ENCODE measurements at regions of chr2 and their contacts with region 1.

Region 1: GRCh38 chr2:30239308-30239985 is 8.1 kb downstream of the LBH start:
- DNase-seq: peak; percentile 48 to 91 (median 79)
- ATAC-seq: peak; percentile 73
- H3K4me3 ChIP-seq: peak overlapping the region; percentile 11 to 39
- H3K4me3 Mint-ChIP-seq: peak overlapping the region; percentile 94
- H3K27ac ChIP-seq: peak overlapping the region; percentile 24 to 60
- H3K27ac Mint-ChIP-seq: peak overlapping the region; percentile 96
- H3K4me1 ChIP-seq: peaks cover 90% of the 10 kb centered on the region
- H3K4me1 Mint-ChIP-seq: peaks cover 88% of the 10 kb centered on the region
- H3K27me3 ChIP-seq: no peaks in the 10 kb centered on the region
- H3K27me3 Mint-ChIP-seq: no peaks in the 10 kb centered on the region
- CTCF ChIP-seq: peak; percentile 95

Region 2: DNA sequence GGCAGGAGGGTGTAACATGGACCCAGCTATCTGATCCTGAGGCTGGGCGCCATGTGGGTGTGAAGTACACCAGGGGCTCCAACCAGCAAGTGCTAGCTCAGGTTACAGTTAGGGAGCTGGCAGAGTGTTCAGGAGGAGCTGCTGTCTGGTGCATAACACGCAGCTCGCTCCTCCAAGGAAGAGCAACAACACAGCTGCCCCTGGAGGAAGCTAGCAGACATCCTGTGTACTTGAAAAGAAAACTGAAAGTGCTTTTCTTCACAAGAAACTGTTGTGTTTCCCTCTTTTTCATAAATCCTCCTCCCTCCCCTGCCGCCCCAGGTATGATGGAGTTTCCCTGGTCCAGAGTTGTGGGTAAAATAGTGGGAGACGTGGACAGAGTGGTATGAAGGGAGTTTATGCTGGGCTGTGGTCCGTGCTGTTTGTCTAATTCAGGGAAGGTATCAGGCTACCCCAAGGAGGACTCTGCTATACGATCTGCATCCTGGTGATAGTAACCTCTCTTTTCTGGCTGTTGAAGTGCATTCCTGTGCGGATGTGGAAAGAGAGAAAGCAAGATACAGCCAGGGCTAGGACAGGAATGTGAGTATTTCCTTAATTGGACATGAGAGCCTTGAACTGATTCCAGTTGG is 14.2 kb before region 1 on chr2:
- CTCF ChIA-PET with region 1: interaction called, 230 read pairs
- POLR2A ChIA-PET with region 1: interaction called, 54 read pairs
- intact Hi-C with region 1: no loop called
- DNase-seq: peak in 8 of 9 experiments; percentile 37 to 86 (median 57)
- ATAC-seq: peak; percentile 68
- H3K4me3 ChIP-seq: peak overlapping the region; percentile 59 to 61
- H3K4me3 Mint-ChIP-seq: peak overlapping the region; percentile 99
- H3K27ac ChIP-seq: peak overlapping the region; percentile 78 to 93
- H3K27ac Mint-ChIP-seq: peak overlapping the region; percentile 100
- H3K4me1 ChIP-seq: peaks cover 76% of the 10 kb centered on the region
- H3K4me1 Mint-ChIP-seq: peaks cover 83% of the 10 kb centered on the region
- H3K27me3 ChIP-seq: no peaks in the 10 kb centered on the region
- H3K27me3 Mint-ChIP-seq: no peaks in the 10 kb centered on the region
- CTCF ChIP-seq: no peak

Region 3: GRCh38 chr2:30252723-30253701 is 13.6 kb after region 1 on chr2:
- CTCF ChIA-PET with region 1: interaction called, 230 read pairs
- POLR2A ChIA-PET with region 1: interaction called, 123 read pairs
- intact Hi-C with region 1: loop called (anchors 1 to 2 kb)
- DNase-seq: peak in 7 of 9 experiments; percentile 36 to 64 (median 55)
- ATAC-seq: peak; percentile 37
- H3K4me3 ChIP-seq: peak overlapping the region in 1 of 2 experiments; percentile 17
- H3K4me3 Mint-ChIP-seq: peak overlapping the region; percentile 46
- H3K27ac ChIP-seq: peak overlapping the region; percentile 28 to 68
- H3K27ac Mint-ChIP-seq: peak overlapping the region; percentile 98
- H3K4me1 ChIP-seq: peaks cover 97% of the 10 kb centered on the region
- H3K4me1 Mint-ChIP-seq: peaks cover 96% of the 10 kb centered on the region
- H3K27me3 ChIP-seq: no peaks in the 10 kb centered on the region
- H3K27me3 Mint-ChIP-seq: no peaks in the 10 kb centered on the region
- CTCF ChIP-seq: no peak

Region 4: DNA sequence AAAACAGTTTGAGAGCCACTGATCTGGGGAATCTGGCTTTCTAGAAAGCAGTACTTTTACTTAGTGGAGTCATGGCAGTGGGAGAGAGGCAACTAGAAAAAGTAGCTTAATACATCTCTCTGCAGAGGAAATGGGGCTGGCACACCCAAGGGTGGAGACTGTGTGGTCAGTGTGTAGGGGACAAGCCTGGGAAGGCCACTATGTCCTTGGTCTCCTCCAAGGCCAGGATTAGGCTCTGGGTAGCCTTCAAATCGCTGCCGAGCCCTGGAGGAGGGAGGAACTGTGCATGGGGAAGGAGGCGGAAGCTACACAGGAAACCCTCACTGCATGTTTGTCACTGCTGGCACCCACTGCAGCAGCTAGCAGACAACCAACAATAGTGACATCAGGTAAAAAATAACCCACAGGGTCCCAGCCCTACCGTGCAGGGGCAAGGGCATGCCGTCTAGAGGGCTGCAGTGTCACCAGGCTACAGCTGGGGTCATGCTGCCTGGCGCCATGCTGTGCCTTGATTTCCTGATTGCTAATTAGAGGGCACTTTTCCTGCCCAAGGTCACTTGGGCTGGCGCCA is 26.7 kb after region 1 on chr2:
- CTCF ChIA-PET with region 1: interaction called, 17 read pairs
- POLR2A ChIA-PET with region 1: interaction called, 63 read pairs
- intact Hi-C with region 1: no loop called
- DNase-seq: peak; percentile 49 to 89 (median 71)
- ATAC-seq: peak; percentile 90
- H3K4me3 ChIP-seq: peak overlapping the region; percentile 31 to 40
- H3K4me3 Mint-ChIP-seq: peak overlapping the region; percentile 82
- H3K27ac ChIP-seq: peak overlapping the region; percentile 72 to 87
- H3K27ac Mint-ChIP-seq: peak overlapping the region; percentile 98
- H3K4me1 ChIP-seq: peaks cover 69% of the 10 kb centered on the region
- H3K4me1 Mint-ChIP-seq: peaks cover 85% of the 10 kb centered on the region
- H3K27me3 ChIP-seq: no peaks in the 10 kb centered on the region
- H3K27me3 Mint-ChIP-seq: no peaks in the 10 kb centered on the region
- CTCF ChIP-seq: no peak

Region 5: DNA sequence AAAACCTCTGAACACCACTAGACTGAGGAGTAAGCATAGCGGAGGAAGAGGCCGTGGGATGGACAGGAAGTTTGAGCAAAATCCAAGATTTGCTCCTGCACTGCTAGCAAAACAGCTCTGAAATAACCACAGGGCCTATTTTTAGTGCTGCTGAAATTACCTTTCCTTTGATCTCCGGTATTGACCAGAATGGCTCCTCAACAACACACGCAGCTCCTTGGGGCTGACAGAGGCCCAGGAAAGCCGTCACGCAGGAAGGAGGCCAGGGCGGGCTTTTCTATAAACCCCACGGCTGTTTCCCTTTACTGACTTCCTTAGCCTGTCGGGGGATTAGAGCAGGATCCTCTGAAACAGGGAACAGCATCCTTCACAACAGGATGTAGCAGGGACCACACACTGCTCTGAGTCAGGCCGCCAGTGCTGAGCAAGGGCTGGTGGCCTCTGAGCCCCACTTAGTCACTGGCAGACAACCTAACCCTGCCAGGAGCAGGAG is 126.8 kb after region 1 on chr2:
- CTCF ChIA-PET with region 1: interaction called, 11 read pairs
- POLR2A ChIA-PET with region 1: no interaction called
- intact Hi-C with region 1: loop called in 1 of 2 experiments (anchors 2 kb)
- DNase-seq: peak in 6 of 9 experiments; percentile 25 to 68 (median 37)
- ATAC-seq: peak; percentile 70
- H3K4me3 ChIP-seq: no peak overlapping the region
- H3K4me3 Mint-ChIP-seq: no peak overlapping the region
- H3K27ac ChIP-seq: no peak overlapping the region
- H3K27ac Mint-ChIP-seq: peak overlapping the region; percentile 19
- H3K4me1 ChIP-seq: peaks cover 33% of the 10 kb centered on the region
- H3K4me1 Mint-ChIP-seq: peaks cover 49% of the 10 kb centered on the region
- H3K27me3 ChIP-seq: no peaks in the 10 kb centered on the region
- H3K27me3 Mint-ChIP-seq: no peaks in the 10 kb centered on the region
- CTCF ChIP-seq: no peak

Region 6: GRCh38 chr2:30447149-30448045 is 207.9 kb after region 1 on chr2 and contains the start of gene LCLAT1:
- CTCF ChIA-PET with region 1: interaction called, 14 read pairs
- POLR2A ChIA-PET with region 1: interaction called, 4 read pairs
- intact Hi-C with region 1: loop called in 1 of 2 experiments (anchors 1 kb)
- DNase-seq: peak; percentile 66 to 95 (median 84)
- ATAC-seq: peak; percentile 88
- H3K4me3 ChIP-seq: peak within 1 kb of the TSS; percentile 87 to 99
- H3K4me3 Mint-ChIP-seq: peak within 1 kb of the TSS; percentile 94
- H3K27ac ChIP-seq: peak within 1 kb of the TSS; percentile 92 to 95
- H3K27ac Mint-ChIP-seq: peak within 1 kb of the TSS; percentile 98
- H3K4me1 ChIP-seq: peaks cover 20% of the 10 kb centered on the region
- H3K4me1 Mint-ChIP-seq: peaks cover 45% of the 10 kb centered on the region
- H3K27me3 ChIP-seq: no peaks in the 10 kb centered on the region
- H3K27me3 Mint-ChIP-seq: no peaks in the 10 kb centered on the region
- CTCF ChIP-seq: no peak
- total RNA-seq, gene LCLAT1: 11.3 to 12.1 TPM

Region 7: DNA sequence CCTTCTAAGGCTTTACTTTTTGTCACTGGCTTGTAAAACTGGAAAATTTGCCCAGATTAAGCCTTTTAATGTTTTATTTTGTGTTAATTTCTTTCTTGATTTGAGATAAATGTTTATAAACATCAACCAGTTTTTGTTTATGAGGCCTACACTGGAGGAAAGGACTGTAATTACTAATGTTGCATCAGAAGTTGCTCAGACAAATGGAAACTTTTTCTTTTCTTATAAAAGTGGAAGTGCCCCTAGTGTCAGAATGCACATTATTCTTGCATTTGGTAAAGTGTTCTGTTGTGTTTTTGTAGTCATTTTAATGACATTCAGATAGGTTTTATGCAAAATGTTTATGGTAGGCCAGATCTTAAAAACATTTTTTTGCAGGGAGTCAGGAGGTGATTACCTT is 232.9 kb after region 1 on chr2:
- CTCF ChIA-PET with region 1: interaction called, 20 read pairs
- POLR2A ChIA-PET with region 1: no interaction called
- intact Hi-C with region 1: no loop called
- DNase-seq: no peak
- ATAC-seq: no peak
- H3K4me3 ChIP-seq: no peak overlapping the region
- H3K4me3 Mint-ChIP-seq: no peak overlapping the region
- H3K27ac ChIP-seq: no peak overlapping the region
- H3K27ac Mint-ChIP-seq: no peak overlapping the region
- H3K4me1 ChIP-seq: peaks cover 14% of the 10 kb centered on the region
- H3K4me1 Mint-ChIP-seq: peaks cover 49% of the 10 kb centered on the region
- H3K27me3 ChIP-seq: no peaks in the 10 kb centered on the region
- H3K27me3 Mint-ChIP-seq: no peaks in the 10 kb centered on the region
- CTCF ChIP-seq: no peak